ENCODE measurements at regions of chr16 and their contacts with region 1.

Region 1: GRCh38 chr16:5837007-5837670 is 739.5 kb upstream of the EEF2KMT start:
- DNase-seq: no peak
- H3K4me3 ChIP-seq: no peak overlapping the region
- H3K27ac ChIP-seq: no peak overlapping the region
- H3K4me1 ChIP-seq: no peaks in the 10 kb centered on the region
- H3K27me3 ChIP-seq: no peaks in the 10 kb centered on the region
- CTCF ChIP-seq: no peak

Region 2: DNA sequence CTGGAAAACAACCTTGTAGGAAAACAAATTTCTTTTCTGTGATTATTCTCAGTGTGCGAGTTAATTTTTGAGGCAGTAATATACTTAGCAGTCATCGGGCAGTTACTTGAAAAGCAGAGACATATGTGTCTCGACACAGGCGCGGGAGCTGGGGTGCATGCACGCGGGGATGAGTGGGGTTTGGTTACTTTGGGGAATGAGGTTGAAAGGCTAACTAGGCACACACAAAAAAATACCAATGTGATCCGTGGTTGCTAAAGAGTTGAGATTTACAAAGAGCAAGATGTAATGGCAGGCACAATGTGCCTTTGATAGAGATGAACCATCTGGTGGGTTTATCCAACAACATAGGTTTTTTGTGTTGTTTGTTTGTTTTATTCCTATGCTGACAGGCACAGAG is 35.7 kb before region 1 on chr16:
- CTCF ChIA-PET with region 1: no interaction called
- dilution Hi-C with region 1: loop called (anchors 5 kb)
- in situ Hi-C with region 1: no loop called
- intact Hi-C with region 1: no loop called
- DNase-seq: no peak
- H3K4me3 ChIP-seq: no peak overlapping the region
- H3K27ac ChIP-seq: no peak overlapping the region
- H3K4me1 ChIP-seq: no peaks in the 10 kb centered on the region
- H3K27me3 ChIP-seq: no peaks in the 10 kb centered on the region
- CTCF ChIP-seq: no peak

Region 3: DNA sequence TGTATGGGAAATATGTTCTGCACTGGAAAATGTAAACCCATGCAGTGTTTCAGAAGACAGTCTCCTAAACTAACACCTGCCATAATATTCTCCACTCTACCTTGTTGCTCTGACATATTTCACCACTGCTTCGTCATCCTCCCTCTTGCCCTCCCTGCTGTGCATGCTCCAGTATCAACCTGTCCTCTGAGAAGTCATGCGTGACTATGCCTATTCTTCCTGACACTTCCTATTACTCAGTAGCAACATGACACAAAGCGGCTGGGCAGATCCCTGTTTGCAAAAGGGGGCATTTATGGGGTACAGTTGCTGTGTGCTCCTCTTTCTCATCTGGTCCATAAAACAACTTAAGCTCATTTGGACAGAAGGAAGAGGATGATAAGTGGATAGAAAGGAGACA is 66.0 kb after region 1 on chr16:
- CTCF ChIA-PET with region 1: no interaction called
- dilution Hi-C with region 1: no loop called
- in situ Hi-C with region 1: no loop called
- intact Hi-C with region 1: loop called (anchors 1 kb)
- DNase-seq: peak; percentile 85
- H3K4me3 ChIP-seq: no peak overlapping the region
- H3K27ac ChIP-seq: no peak overlapping the region
- H3K4me1 ChIP-seq: no peaks in the 10 kb centered on the region
- H3K27me3 ChIP-seq: no peaks in the 10 kb centered on the region
- CTCF ChIP-seq: no peak

Region 4: DNA sequence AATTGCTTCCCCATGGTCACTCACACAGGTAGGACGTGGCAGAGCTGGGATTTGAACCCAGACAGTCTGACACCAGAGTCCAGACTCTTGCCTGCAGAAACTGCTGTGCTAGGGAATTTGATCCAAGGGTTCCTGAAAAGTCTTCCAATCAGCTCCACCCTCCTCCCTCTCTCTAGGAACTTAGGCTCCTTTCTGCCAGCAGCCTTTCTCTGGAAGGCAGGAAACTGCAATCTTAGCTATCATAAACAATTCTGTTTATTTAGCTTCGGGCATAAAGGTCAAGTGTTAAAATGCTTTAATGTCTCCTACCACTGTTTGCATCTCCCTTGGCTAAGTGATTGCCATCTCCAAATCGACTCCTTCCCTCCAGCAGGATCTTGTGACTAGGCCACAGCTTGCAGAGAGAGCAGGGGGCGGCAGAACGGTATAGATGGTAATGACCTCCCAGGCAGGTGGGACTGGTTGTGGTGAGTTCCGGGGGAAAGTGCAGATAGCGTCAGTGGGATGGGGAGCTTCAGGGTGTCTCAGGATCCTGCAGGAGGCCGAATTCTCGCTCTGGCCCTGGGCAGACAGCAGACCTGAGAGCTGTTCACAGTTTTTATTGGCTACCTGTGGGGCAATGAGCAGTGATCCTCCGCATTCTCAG is 142.9 kb after region 1 on chr16:
- CTCF ChIA-PET with region 1: no interaction called
- dilution Hi-C with region 1: no loop called
- in situ Hi-C with region 1: no loop called
- intact Hi-C with region 1: no loop called
- DNase-seq: no peak
- H3K4me3 ChIP-seq: no peak overlapping the region
- H3K27ac ChIP-seq: no peak overlapping the region
- H3K4me1 ChIP-seq: no peaks in the 10 kb centered on the region
- H3K27me3 ChIP-seq: no peaks in the 10 kb centered on the region
- CTCF ChIP-seq: no peak

Region 5: GRCh38 chr16:6059671-6060070 is 222.5 kb after region 1 on chr16:
- CTCF ChIA-PET with region 1: no interaction called
- dilution Hi-C with region 1: no loop called
- in situ Hi-C with region 1: no loop called
- intact Hi-C with region 1: no loop called
- DNase-seq: no peak
- H3K4me3 ChIP-seq: no peak overlapping the region
- H3K27ac ChIP-seq: no peak overlapping the region
- H3K4me1 ChIP-seq: no peaks in the 10 kb centered on the region
- H3K27me3 ChIP-seq: no peaks in the 10 kb centered on the region
- CTCF ChIP-seq: no peak